ENCODE measurements at regions of chr15 and their contacts with region 1.

Region 1: GRCh38 chr15:84783496-84784251 is 33.5 kb upstream of the ALPK3 start:
- DNase-seq: no peak
- ATAC-seq: no peak
- H3K4me3 ChIP-seq: no peak overlapping the region
- H3K27ac ChIP-seq: no peak overlapping the region
- H3K4me1 ChIP-seq: peaks cover 3 to 55% (median 35%) of the 10 kb centered on the region in 12 donors
- H3K27me3 ChIP-seq: no peaks in the 10 kb centered on the region
- CTCF ChIP-seq: no peak
- POLR2A ChIP-seq: no peak

Region 2: GRCh38 chr15:84725001-84725491 is 58.6 kb before region 1 on chr15:
- intact Hi-C with region 1: loop called in 1 of 10 experiments (anchors 10 kb)
- DNase-seq: peak in 3 of 5 donors; percentile 35 to 45 (median 43)
- ATAC-seq: peak in 3 of 4 donors; percentile 82 to 92 (median 89)
- H3K4me3 ChIP-seq: no peak overlapping the region
- H3K27ac ChIP-seq: peak overlapping the region; percentile 47 to 88 (median 76)
- H3K4me1 ChIP-seq: peaks cover 0 to 48% (median 9%) of the 10 kb centered on the region in 12 donors
- H3K27me3 ChIP-seq: no peaks in the 10 kb centered on the region
- CTCF ChIP-seq: no peak
- POLR2A ChIP-seq: no peak

Region 3: DNA sequence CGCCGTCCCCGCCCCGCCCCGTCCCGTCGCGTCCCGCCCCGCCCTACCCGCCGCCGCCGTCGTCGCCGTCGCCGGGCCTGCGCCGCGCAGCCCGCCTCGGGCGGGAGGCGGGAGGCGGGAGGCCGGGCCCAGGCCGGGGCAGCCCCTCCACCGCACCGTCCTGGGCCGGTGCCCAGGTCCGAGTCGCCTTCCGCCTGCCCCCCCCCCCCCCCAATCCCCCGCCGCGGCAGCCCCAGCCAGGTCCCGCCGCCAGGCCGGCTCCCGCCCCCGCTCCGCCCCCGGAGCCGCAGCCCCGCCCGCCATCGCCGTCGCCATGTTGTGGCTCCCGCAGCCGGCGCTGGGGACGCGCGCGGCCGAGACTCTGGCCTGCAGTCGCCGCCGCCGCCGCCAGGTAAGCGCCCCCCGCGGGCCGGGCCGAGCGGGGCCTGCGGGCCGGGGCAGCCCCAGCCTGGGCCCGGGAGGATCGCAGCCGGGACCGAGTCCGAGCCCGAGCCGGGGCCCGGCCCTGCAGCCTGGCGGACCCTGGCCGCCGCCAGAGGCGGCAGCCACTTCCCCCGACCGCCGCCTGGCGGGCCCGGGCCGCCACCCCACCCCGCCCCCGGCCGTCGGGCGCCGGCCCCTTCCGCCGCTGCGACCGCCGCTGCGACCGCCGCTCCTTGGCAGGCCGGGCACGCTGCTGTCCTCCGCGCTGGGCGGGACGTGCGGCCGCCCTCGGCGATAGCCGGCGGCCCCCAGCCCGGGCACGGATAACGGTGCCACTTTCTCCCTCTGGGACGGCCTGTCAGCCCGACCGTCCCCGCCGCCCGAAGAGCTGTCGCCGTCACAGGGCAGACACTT is 35.2 kb before region 1 on chr15 and contains the start of gene ZNF592:
- intact Hi-C with region 1: no loop called
- DNase-seq: peak; percentile 89 to 93 (median 91)
- ATAC-seq: peak; percentile 72 to 88 (median 78)
- H3K4me3 ChIP-seq: peak within 1 kb of the TSS; percentile 64 to 97 (median 94)
- H3K27ac ChIP-seq: peak within 1 kb of the TSS; percentile 99 to 100 (median 100)
- H3K4me1 ChIP-seq: peaks cover 13 to 72% (median 52%) of the 10 kb centered on the region in 12 donors
- H3K27me3 ChIP-seq: no peaks in the 10 kb centered on the region
- CTCF ChIP-seq: peak in 5 of 12 donors; percentile 13 to 62 (median 35)
- POLR2A ChIP-seq: no peak
- total RNA-seq, gene ZNF592: 16.8 to 28.6 (median 21.4) TPM

Region 4: GRCh38 chr15:84761607-84762131 is 22.0 kb before region 1 on chr15:
- intact Hi-C with region 1: loop called in 1 of 10 experiments (anchors 2 kb)
- DNase-seq: no peak
- ATAC-seq: no peak
- H3K4me3 ChIP-seq: no peak overlapping the region
- H3K27ac ChIP-seq: peak overlapping the region in 1 of 12 donors; percentile 40
- H3K4me1 ChIP-seq: peaks cover 8 to 73% (median 60%) of the 10 kb centered on the region in 12 donors
- H3K27me3 ChIP-seq: no peaks in the 10 kb centered on the region
- CTCF ChIP-seq: no peak
- POLR2A ChIP-seq: no peak

Region 5: DNA sequence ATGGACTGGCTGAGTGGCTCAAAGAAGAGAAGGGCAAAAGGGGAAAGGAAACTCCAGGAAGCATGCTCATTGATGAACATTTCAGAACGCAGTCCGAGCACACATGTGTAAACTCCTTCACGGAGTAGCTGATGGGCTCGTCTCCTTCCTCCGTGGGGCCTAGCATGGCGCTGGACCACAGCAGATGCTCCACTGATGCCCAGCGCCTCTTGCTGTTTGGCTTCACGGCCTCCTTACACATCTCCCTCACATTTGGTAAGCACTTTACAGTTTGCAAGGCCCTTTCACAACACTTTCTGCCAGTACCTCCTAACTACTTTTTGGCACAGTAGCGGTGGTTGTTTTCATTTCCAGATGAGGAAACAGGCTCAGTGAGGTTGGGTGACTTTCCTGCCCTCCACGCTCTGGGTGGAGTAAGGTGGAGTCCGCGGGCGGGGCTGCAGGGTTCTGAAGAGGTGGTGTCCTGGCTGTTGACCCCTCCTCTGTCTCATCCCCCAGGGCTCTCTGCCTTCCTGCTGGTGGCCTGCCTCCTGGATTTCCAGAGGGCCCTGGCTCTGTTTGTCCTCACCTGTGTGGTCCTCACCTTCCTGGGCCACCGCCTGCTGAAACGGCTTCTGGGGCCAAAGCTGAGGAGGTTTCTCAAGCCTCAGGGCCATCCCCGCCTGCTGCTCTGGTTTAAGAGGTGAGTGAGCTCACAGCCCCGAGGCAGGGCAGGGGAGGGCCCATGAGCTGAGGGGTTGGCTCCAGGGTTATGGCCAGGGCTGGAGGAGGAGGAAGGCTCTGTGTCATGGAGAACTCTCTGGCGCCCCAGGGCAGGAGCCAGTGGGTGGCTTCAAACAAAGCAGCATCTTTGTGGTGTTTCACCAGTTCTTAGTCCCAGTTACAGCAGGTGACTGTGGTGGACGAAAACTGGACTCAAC is 111.0 kb after region 1 on chr15:
- intact Hi-C with region 1: no loop called
- DNase-seq: no peak
- ATAC-seq: no peak
- H3K4me3 ChIP-seq: no peak overlapping the region
- H3K27ac ChIP-seq: no peak overlapping the region
- H3K4me1 ChIP-seq: no peaks in the 10 kb centered on the region
- H3K27me3 ChIP-seq: no peaks in the 10 kb centered on the region
- CTCF ChIP-seq: no peak
- POLR2A ChIP-seq: no peak

Measured in heart left ventricle (tissue), 16 donors.